IMR-90 (cell line): ENCODE measurements at regions of chr7 and their contacts with region 1.

Region 1: GRCh38 chr7:50467817-50468610 is 17.9 kb upstream of the FIGNL1 start:
- DNase-seq: peak; percentile 58
- ATAC-seq: peak; percentile 100
- H3K4me3 ChIP-seq: no peak overlapping the region
- H3K27ac ChIP-seq: no peak overlapping the region
- H3K4me1 ChIP-seq: no peaks in the 10 kb centered on the region
- H3K27me3 ChIP-seq: peaks cover 19% of the 10 kb centered on the region
- CTCF ChIP-seq: peak; percentile 92
- POLR2A ChIP-seq: peak; percentile 36; the same call in 1 of the 2 replicates
- RAD21 ChIP-seq: peak; percentile 96

Region 2: GRCh38 chr7:50632561-50633413 is 164.8 kb after region 1 on chr7:
- CTCF ChIA-PET with region 1: no interaction called
- POLR2A ChIA-PET with region 1: no interaction called
- dilution Hi-C with region 1: no loop called
- in situ Hi-C with region 1: no loop called
- intact Hi-C with region 1: loop called (anchors 1 kb)
- DNase-seq: peak; percentile 50
- ATAC-seq: peak; percentile 95
- H3K4me3 ChIP-seq: no peak overlapping the region
- H3K27ac ChIP-seq: no peak overlapping the region
- H3K4me1 ChIP-seq: no peaks in the 10 kb centered on the region
- H3K27me3 ChIP-seq: no peaks in the 10 kb centered on the region
- CTCF ChIP-seq: peak; percentile 82
- POLR2A ChIP-seq: no peak
- RAD21 ChIP-seq: peak; percentile 54

Region 3: DNA sequence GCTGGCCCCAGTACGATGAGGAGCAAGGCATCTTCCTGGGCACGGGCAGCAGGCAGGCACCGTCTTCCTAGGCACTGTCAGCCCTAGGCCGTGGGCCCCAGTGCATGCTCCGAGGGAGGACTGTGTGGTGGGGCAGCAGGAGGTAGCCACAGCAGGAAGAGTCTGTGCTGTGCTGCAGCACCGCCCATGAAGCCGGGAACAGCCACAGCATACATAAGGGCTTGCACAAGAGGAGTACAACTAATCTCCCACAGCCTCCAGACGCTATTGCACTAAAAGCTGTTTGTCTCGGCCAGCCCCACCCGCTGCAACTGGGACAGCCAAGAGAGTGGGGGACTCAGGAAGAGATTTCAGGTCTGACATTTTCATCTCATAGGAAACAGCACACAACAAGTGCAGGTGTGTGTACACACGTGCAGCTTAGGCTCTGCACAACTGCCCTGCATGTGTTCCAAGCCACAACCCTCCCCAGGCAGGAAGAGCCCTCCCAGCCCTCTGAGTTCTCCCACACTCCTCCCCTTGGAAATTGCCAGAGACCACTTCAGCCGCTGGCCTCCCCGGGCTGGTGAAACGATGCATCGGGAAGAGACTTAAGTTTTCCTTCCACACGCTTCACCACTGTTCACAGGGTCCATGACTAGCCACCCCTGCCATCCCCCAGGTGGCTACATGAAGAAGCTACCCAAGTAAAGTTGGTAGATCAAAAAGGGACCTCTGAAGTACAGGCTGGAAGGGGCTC is 185.3 kb after region 1 on chr7:
- CTCF ChIA-PET with region 1: no interaction called
- POLR2A ChIA-PET with region 1: no interaction called
- dilution Hi-C with region 1: no loop called
- in situ Hi-C with region 1: no loop called
- intact Hi-C with region 1: no loop called
- DNase-seq: no peak
- ATAC-seq: no peak; the same call in 1 of the 2 replicates
- H3K4me3 ChIP-seq: no peak overlapping the region
- H3K27ac ChIP-seq: no peak overlapping the region
- H3K4me1 ChIP-seq: peaks cover 1% of the 10 kb centered on the region; the same call in 1 of the 2 replicates
- H3K27me3 ChIP-seq: no peaks in the 10 kb centered on the region
- CTCF ChIP-seq: no peak
- POLR2A ChIP-seq: no peak
- RAD21 ChIP-seq: no peak

Region 4: DNA sequence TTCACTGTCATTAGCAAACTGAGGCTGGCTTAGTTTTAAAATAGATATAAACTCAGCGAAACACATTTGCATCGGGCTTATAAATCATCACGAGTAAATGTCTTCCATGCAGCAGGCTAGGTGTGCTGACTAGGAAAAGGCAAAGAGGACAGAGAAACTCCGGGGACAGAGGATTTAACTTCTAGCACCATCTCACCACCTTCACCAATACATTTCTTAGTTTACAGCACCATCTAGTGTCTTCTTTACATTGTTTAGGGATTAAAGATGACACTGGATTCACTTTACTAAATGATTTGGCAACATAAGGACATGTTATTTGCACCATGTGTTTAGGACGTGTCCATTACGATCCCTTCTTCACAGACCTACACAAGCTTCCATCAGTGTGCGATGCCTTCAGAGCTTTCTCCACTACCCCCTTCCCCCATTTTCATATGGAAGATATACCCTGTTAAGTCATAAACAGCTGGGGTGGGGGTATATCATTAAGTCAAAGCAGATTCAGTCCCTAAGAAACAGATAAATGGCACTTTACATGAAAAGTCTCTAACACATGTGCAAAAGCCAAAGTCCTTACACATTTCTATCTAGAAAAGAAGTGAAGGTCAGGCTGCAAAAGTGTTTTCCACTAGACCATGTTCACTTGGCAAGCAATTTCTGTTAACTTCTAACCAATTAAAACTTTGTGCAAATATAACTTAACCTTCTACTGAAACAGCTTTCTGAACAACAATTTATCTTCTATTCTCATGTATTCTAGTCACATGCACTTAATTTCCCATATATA is 211.4 kb after region 1 on chr7:
- CTCF ChIA-PET with region 1: interaction called, 4 read pairs
- POLR2A ChIA-PET with region 1: no interaction called
- dilution Hi-C with region 1: no loop called
- in situ Hi-C with region 1: loop called (anchors 25 kb)
- intact Hi-C with region 1: loop called (anchors 1 kb)
- DNase-seq: peak; percentile 43
- ATAC-seq: peak; percentile 58
- H3K4me3 ChIP-seq: no peak overlapping the region
- H3K27ac ChIP-seq: no peak overlapping the region
- H3K4me1 ChIP-seq: peaks cover 3% of the 10 kb centered on the region; the same call in 1 of the 2 replicates
- H3K27me3 ChIP-seq: no peaks in the 10 kb centered on the region
- CTCF ChIP-seq: peak; percentile 45
- POLR2A ChIP-seq: no peak
- RAD21 ChIP-seq: peak; percentile 59